GM10248 (cell line): ENCODE measurements at regions of chr6 and their contacts with region 1.

Region 1: DNA sequence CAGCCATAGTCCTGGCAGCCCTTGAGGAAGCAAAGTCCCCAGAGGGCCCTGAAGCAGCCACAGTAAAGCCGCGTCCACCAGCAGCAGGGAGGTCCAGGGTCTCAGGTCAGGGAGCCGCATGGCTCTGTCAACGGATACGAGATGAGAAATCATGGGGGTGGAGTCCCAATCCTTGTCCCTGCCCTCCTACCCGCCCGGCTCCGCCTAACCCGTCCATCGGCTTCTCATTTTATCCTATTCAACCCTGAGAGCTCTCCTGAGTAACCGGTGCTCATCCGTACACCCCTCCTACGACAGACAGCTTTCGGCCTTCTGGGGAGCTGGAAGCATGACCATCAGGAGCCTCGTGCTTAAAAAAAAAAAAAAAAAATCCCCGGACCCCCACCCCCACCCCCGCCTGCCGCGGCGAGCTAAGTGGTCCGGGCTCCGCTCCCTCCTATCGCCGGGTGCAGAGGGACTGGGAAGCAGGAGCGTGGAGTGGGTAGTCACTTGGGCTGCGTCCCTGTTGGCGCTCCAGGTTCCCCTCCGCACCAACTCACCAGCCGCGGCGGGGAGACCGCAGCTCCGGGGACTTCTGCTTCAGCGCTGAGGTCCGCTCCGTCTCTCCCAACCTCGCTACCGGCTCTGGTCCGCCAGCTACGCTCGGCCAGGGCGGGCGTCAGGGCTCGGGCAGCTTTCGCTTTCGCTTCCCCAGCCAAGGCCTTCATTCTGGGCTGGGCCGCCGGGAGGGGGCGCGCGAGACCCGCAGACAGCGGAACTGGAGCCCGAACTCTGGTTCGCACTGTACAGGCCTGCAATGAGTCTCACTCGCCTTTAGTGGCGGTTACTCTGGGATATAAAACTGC is at the start of gene TAP2:
- DNase-seq: peak; percentile 94
- CTCF ChIP-seq: peak; percentile 98

Region 2: GRCh38 chr6:32774426-32774825 is 63.9 kb before region 1 on chr6:
- CTCF ChIA-PET with region 1: no interaction called
- POLR2A ChIA-PET with region 1: no interaction called
- DNase-seq: no peak
- CTCF ChIP-seq: no peak

Region 3: GRCh38 chr6:32799168-32799567 is 39.2 kb before region 1 on chr6:
- CTCF ChIA-PET with region 1: no interaction called
- POLR2A ChIA-PET with region 1: no interaction called
- DNase-seq: no peak
- CTCF ChIP-seq: no peak

Region 4: GRCh38 chr6:32819729-32820128 is 18.6 kb before region 1 on chr6:
- CTCF ChIA-PET with region 1: interaction called, 32 read pairs
- POLR2A ChIA-PET with region 1: interaction called, 5 read pairs
- DNase-seq: no peak
- CTCF ChIP-seq: no peak

Region 5: GRCh38 chr6:32853541-32854375 is 15.4 kb after region 1 on chr6 and contains the starts of genes PSMB9 and TAP1:
- CTCF ChIA-PET with region 1: interaction called, 339 read pairs
- POLR2A ChIA-PET with region 1: interaction called, 44 read pairs
- DNase-seq: peak; percentile 93
- CTCF ChIP-seq: peak; percentile 97

Region 6: DNA sequence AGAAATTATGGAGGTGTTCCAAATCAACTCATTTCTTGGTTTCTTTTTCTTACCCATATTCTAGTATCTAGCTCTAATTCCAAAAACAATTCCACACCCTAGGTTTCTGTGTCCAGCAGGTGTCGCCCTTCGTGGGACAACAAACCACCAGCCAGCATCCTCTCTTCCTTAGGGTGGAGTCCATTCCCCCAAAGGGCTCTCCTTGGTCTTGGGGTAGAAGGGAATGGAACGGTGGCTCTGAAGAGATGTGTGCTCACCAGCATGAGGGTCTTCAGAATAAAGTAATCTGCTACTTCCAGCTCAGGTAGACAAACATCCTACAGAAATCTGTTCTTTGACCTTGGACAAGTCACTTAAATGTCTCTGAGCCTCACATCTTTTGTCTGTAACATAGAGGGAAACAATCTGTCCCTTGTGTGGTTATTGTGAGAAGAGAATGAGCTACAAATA is 95.3 kb after region 1 on chr6:
- CTCF ChIA-PET with region 1: interaction called, 17 read pairs
- POLR2A ChIA-PET with region 1: no interaction called
- DNase-seq: peak; percentile 54
- CTCF ChIP-seq: peak; percentile 81

Region 7: GRCh38 chr6:32952817-32953739 is 114.7 kb after region 1 on chr6 and contains the start of gene HLA-DMA:
- CTCF ChIA-PET with region 1: interaction called, 26 read pairs
- POLR2A ChIA-PET with region 1: interaction called, 4 read pairs
- DNase-seq: peak; percentile 86
- CTCF ChIP-seq: peak; percentile 56